CD4-positive, alpha-beta memory T cell (primary cell): ENCODE measurements at regions of chr1 and their contacts with region 1.

Region 1: DNA sequence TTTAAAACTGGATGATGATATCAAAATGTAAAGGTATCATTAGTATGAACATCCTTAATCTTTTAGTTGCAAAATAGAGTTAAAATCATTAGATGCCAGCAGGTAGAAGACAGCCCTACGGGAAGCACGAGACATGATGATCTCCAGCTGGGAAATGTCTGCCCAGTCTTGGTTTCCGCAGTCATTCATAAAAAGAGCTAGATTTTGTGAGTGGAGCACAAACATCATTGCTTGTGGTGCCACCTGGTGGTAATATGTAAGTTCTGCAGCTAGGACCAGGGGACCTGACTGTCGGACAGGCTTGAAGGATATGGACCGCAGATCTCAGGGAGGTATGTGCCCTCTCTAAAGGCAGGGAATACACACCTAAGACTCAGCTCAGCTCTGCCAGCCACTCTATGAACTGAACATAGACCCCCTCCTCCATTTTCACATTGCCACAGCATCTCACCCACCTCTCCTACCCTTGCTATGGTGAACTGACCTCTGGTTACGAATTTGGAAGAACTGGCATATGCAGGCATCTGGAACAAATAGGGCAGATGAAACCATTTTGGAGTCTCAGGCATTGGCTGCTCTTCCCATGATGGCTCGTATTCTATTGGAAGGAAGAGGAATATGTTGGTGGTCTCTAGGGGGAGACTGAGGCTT is 9.2 kb downstream of the FCMR start:
- DNase-seq: peak; percentile 67 to 71 (median 68)
- H3K4me3 ChIP-seq: no peak overlapping the region
- H3K4me3 Mint-ChIP-seq: peak overlapping the region; percentile 21 to 68 (median 54)
- H3K27ac ChIP-seq: peak overlapping the region; percentile 29
- H3K27ac Mint-ChIP-seq: peak overlapping the region; percentile 71 to 93 (median 92)
- H3K4me1 ChIP-seq: peaks cover 98% of the 10 kb centered on the region
- H3K4me1 Mint-ChIP-seq: peaks cover 76 to 96% (median 87%) of the 10 kb centered on the region in 4 donors
- H3K27me3 ChIP-seq: no peaks in the 10 kb centered on the region
- H3K27me3 Mint-ChIP-seq: no peaks in the 10 kb centered on the region

Region 2: GRCh38 chr1:206635080-206635977 is 277.2 kb before region 1 on chr1 and contains the start of gene DYRK3:
- CTCF ChIA-PET with region 1: interaction called, 12 read pairs
- POLR2A ChIA-PET with region 1: no interaction called
- intact Hi-C with region 1: loop called (anchors 2 kb)
- DNase-seq: peak; percentile 84 to 91 (median 87)
- H3K4me3 ChIP-seq: peak within 1 kb of the TSS; percentile 37 to 87
- H3K4me3 Mint-ChIP-seq: peak within 1 kb of the TSS; percentile 87 to 96 (median 90)
- H3K27ac ChIP-seq: peak within 1 kb of the TSS; percentile 48
- H3K27ac Mint-ChIP-seq: peak within 1 kb of the TSS; percentile 85 to 96 (median 95)
- H3K4me1 ChIP-seq: peaks cover 15% of the 10 kb centered on the region
- H3K4me1 Mint-ChIP-seq: peaks cover 8 to 26% (median 13%) of the 10 kb centered on the region in 4 donors
- H3K27me3 ChIP-seq: no peaks in the 10 kb centered on the region
- H3K27me3 Mint-ChIP-seq: peaks cover 4 to 7% of the 10 kb centered on the region in 2 donors
- total RNA-seq, gene DYRK3: 0.78 to 1.2 TPM

Region 3: DNA sequence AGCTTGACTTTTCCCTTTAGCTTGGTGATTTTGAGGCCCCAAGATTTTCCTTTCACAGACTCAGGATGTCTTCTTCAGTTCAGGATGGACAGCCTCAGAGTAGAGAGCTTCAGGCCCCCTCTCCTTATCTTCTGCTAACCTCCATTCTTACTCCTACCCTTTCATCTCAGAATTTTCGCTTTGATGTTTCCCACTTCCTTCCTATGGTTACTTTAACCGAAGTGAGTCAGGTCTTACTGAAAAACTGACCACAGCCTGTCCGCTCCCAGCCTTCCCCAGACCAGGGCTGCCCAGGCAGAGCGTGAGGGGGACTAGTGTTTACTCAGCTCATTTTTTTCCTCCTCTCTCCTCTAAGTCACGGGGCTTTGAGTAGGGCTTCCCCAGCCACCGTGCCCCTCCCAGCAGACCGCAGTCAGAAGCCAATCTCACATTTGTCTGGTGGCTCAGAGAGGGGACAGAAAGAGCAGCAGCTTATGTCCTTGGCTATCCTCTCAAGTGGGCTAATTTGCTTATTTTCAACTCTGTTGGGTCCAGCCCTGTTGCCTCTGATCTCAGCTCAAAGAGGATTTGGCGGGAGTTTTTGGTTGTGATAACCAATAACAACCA is 146.2 kb before region 1 on chr1:
- CTCF ChIA-PET with region 1: interaction called, 13 read pairs
- POLR2A ChIA-PET with region 1: interaction called, 5 read pairs
- intact Hi-C with region 1: no loop called
- DNase-seq: peak; percentile 67 to 85 (median 74)
- H3K4me3 ChIP-seq: no peak overlapping the region
- H3K4me3 Mint-ChIP-seq: peak overlapping the region; percentile 61 to 82 (median 76)
- H3K27ac ChIP-seq: no peak overlapping the region
- H3K27ac Mint-ChIP-seq: peak overlapping the region; percentile 82 to 95 (median 91)
- H3K4me1 ChIP-seq: peaks cover 67% of the 10 kb centered on the region
- H3K4me1 Mint-ChIP-seq: peaks cover 48 to 72% (median 61%) of the 10 kb centered on the region in 4 donors
- H3K27me3 ChIP-seq: no peaks in the 10 kb centered on the region
- H3K27me3 Mint-ChIP-seq: no peaks in the 10 kb centered on the region

Region 4: DNA sequence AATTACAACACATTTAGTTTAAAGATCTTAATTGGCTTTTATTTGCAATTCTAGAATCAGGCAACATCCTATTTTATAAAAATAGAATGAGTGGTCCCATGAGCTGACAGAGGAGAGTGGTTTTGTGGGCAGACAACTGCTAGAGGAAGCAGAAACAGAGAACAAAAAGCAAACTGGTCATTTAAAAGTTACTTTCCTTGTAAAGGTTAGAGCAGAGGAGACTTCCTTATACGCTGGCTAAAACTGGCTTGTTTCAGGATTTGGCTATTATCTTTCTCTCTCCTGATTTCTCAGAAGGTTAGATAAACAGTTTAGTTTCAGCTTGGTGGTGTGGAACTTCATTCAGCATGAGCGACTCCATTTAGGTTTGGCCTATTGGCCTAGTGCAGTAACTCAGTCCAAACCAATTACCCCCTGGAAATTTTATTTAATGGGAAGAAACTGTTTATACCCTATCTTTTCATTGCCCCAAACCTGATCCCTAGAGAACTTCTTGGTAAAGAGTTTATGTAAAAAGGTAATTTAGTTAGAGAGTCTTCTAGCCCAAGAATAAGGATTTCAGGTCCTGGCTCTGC is 79.4 kb before region 1 on chr1:
- CTCF ChIA-PET with region 1: interaction called, 10 read pairs
- POLR2A ChIA-PET with region 1: interaction called, 4 read pairs
- intact Hi-C with region 1: no loop called
- DNase-seq: no peak
- H3K4me3 ChIP-seq: no peak overlapping the region
- H3K4me3 Mint-ChIP-seq: no peak overlapping the region
- H3K27ac ChIP-seq: no peak overlapping the region
- H3K27ac Mint-ChIP-seq: no peak overlapping the region
- H3K4me1 ChIP-seq: peaks cover 21% of the 10 kb centered on the region
- H3K4me1 Mint-ChIP-seq: peaks cover 12 to 37% (median 16%) of the 10 kb centered on the region in 4 donors
- H3K27me3 ChIP-seq: no peaks in the 10 kb centered on the region
- H3K27me3 Mint-ChIP-seq: peaks cover 5 to 9% of the 10 kb centered on the region in 2 donors

Region 5: GRCh38 chr1:206887701-206888100 is 24.9 kb before region 1 on chr1:
- CTCF ChIA-PET with region 1: interaction called, 15 read pairs
- POLR2A ChIA-PET with region 1: interaction called, 4 read pairs
- intact Hi-C with region 1: no loop called
- DNase-seq: no peak
- H3K4me3 ChIP-seq: no peak overlapping the region
- H3K4me3 Mint-ChIP-seq: no peak overlapping the region
- H3K27ac ChIP-seq: no peak overlapping the region
- H3K27ac Mint-ChIP-seq: no peak overlapping the region
- H3K4me1 ChIP-seq: peaks cover 16% of the 10 kb centered on the region
- H3K4me1 Mint-ChIP-seq: peaks cover 13 to 35% (median 21%) of the 10 kb centered on the region in 4 donors
- H3K27me3 ChIP-seq: no peaks in the 10 kb centered on the region
- H3K27me3 Mint-ChIP-seq: peaks cover 5% of the 10 kb centered on the region in 2 donors

Region 6: DNA sequence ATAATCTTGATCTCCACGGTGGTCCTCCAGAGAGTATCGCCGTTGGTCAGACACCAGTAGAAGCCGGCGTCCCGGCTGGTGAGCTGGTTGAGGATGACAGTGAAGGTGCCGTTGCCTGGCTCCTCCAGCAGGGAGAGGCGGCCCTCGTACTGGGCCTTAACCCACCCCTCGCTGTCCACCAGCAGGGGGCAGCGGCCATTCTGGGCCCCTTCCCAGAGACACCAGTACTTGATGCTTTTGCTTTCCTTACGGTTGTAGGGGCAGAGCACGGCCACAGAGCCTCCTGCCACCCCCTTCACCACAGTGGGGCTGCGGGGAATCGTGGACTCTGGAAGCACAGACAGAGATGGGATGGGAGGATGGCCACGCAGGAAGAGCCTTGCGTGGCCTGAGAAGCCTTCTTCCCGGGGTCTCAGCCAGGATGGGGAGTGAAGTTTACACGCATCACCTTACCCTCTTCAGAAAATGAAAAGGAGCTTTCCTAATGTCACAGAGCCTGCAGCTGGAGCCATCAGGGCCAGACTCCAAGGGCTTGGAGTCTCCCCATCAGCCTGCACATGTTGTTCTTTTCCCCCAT is 23.0 kb after region 1 on chr1:
- CTCF ChIA-PET with region 1: interaction called, 477 read pairs
- POLR2A ChIA-PET with region 1: interaction called, 179 read pairs
- intact Hi-C with region 1: loop called (anchors 1 kb)
- DNase-seq: peak in 1 of 5 donors; percentile 30
- H3K4me3 ChIP-seq: no peak overlapping the region
- H3K4me3 Mint-ChIP-seq: no peak overlapping the region
- H3K27ac ChIP-seq: no peak overlapping the region
- H3K27ac Mint-ChIP-seq: no peak overlapping the region
- H3K4me1 ChIP-seq: peaks cover 14% of the 10 kb centered on the region
- H3K4me1 Mint-ChIP-seq: peaks cover 9 to 25% (median 19%) of the 10 kb centered on the region in 4 donors
- H3K27me3 ChIP-seq: no peaks in the 10 kb centered on the region
- H3K27me3 Mint-ChIP-seq: no peaks in the 10 kb centered on the region